Ascending aorta (tissue), 2 donors: ENCODE measurements at regions of chr5 and their contacts with region 1.

Region 1: DNA sequence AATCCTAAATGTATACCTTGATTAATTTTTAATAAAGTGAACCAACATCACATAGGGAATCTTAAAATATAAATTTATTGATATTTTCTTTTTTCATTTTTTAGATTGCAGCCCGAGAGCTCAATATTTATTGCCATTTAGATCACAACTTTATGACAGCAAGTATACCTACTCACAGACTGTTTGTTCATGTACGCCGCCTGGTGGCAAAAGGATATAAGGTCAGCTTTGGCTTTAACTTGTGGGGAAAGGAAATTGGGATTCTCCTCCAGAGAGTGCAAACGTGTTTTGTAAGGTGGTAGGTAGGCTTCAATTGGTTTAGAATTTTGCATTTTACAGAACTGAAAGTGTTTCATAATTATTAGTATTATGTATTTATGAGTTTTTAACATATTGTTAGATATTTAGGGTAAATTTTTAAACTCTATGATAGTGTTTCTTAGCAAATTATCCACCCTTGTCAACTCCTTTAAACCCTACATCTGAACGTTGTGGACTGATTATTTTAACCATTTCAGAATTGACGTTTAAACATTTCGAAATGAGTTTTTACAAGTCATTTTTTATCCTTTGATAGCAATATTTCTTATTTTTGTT is 17.5 kb upstream of the DHFR start:
- DNase-seq: peak in 1 of 2 donors; percentile 77
- H3K4me3 ChIP-seq: no peak overlapping the region
- H3K27ac ChIP-seq: no peak overlapping the region
- H3K4me1 ChIP-seq: no peaks in the 10 kb centered on the region
- H3K27me3 ChIP-seq: no peaks in the 10 kb centered on the region
- CTCF ChIP-seq: peak; percentile 26 to 76 (median 75)

Region 2: GRCh38 chr5:80093796-80094195 is 578.4 kb before region 1 on chr5:
- intact Hi-C with region 1: loop called (anchors 5 kb)
- DNase-seq: no peak
- H3K4me3 ChIP-seq: no peak overlapping the region
- H3K27ac ChIP-seq: no peak overlapping the region
- H3K4me1 ChIP-seq: no peaks in the 10 kb centered on the region
- H3K27me3 ChIP-seq: no peaks in the 10 kb centered on the region
- CTCF ChIP-seq: no peak

Region 3: GRCh38 chr5:80474929-80475328 is 197.3 kb before region 1 on chr5:
- intact Hi-C with region 1: no loop called
- DNase-seq: no peak
- H3K4me3 ChIP-seq: no peak overlapping the region
- H3K27ac ChIP-seq: no peak overlapping the region
- H3K4me1 ChIP-seq: no peaks in the 10 kb centered on the region
- H3K27me3 ChIP-seq: no peaks in the 10 kb centered on the region
- CTCF ChIP-seq: no peak

Region 4: DNA sequence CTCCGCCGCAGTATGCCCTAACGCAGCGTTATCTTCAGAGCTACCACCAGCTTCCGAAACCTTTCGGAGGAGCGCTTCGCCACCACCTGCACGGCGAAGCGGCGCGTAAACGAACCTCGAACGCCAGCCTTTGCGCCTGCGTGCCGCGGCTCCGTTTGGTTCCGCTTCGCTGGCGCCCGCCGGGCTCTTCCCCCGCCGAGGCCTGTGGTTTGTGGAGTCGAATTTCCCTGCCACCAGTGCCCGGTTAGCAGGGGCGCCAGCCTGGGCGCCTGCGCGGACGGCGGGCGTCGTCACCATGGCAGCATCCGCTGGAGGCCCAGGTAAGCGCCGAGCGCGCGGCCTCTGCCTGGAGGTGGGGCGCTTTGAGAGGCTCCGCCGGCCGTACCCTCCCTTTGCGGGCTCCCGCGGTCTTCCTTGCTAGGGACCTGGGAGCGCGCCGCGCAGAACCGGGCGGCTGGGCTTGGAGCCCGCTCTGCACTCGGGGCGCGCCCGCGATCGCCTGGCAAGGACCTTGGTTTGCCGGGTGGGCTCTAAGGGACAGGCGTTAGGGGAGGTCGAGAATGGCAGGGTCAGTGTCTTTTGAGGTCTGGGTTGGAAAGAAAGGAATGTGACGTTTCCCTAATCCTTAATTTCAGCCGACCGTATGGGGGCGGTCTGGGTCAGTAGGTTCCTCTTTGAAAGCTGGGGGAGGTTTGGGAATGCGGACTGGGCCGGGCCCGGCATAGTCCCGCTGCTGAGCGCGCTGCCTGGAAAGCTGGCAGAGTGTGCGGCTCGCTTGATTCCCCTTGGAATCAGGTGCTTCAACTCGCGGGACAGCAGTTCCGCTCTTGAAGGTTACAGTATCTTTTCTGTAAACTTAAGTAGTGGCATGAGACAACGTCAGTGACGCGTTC is 184.2 kb before region 1 on chr5 and contains the start of gene FAM151B:
- intact Hi-C with region 1: loop called (anchors 5 kb)
- DNase-seq: peak; percentile 42 to 89
- H3K4me3 ChIP-seq: peak within 1 kb of the TSS; percentile 67 to 74
- H3K27ac ChIP-seq: peak within 1 kb of the TSS; percentile 70 to 76
- H3K4me1 ChIP-seq: no peaks in the 10 kb centered on the region
- H3K27me3 ChIP-seq: no peaks in the 10 kb centered on the region
- CTCF ChIP-seq: peak in 1 of 3 experiments; percentile 14
- total RNA-seq, gene FAM151B: not detected